ENCODE measurements at regions of chr2 and their contacts with region 1.

Region 1: DNA sequence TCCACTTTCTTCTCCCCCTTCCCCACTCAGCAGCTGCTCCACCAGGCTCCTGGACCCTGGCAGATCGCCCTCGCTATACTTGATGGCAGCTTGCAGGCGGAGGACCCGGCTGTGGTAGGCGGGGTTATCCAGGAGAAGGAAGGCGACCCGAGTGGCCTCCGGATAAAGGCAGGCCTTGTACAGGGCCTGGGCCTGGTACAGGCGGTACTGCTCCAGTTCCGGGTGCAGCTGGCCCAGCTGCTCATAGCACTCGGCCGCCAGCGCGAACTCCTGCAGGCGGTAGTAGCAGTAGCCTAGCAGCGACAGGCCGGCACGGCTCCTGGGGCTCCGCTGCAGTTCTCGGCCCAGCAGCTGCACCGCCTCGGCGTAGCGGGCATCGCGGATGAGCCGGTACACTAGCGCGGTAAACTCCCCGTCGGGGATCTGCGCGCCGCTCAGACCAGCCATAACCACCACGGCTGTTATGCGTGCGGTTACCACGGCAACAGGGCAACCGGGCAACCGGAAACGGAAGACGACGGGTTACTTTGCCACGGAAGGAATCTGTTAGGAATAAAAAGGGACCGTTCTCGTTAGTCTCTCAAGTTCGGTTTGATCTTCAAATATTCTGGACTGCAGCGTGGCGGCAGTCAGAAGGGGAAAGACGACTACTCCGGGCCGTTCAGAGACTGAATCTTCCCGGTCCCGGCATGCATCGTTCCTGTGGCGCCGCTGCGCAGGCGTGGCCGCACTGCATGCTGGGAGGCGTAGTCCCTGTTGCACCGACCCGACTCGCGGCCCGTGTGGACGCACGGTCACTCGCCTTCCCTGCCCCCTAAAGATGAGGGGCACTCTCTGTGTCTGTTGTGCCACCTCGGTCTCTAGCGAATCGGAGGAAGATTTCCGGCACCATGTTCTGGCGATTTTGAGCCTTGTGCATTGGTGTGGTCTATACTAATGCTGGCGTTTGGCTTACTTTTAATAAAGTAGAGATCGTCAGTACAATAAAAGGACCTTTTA is 226.0 kb downstream of the AGPS start:
- DNase-seq: peak; percentile 83
- H3K4me3 ChIP-seq: peak overlapping the region; percentile 55 to 82 (median 80)
- H3K27ac ChIP-seq: peak overlapping the region; percentile 99
- H3K4me1 ChIP-seq: peaks cover 4% of the 10 kb centered on the region
- H3K27me3 ChIP-seq: no peaks in the 10 kb centered on the region
- CTCF ChIP-seq: no peak

Region 2: GRCh38 chr2:177489719-177490301 is 128.7 kb before region 1 on chr2:
- CTCF ChIA-PET with region 1: no interaction called
- dilution Hi-C with region 1: no loop called
- in situ Hi-C with region 1: loop called in 1 of 2 experiments (anchors 25 kb)
- intact Hi-C with region 1: no loop called
- DNase-seq: no peak
- H3K4me3 ChIP-seq: no peak overlapping the region
- H3K27ac ChIP-seq: no peak overlapping the region
- H3K4me1 ChIP-seq: no peaks in the 10 kb centered on the region
- H3K27me3 ChIP-seq: no peaks in the 10 kb centered on the region
- CTCF ChIP-seq: peak; percentile 48 to 61

Region 3: DNA sequence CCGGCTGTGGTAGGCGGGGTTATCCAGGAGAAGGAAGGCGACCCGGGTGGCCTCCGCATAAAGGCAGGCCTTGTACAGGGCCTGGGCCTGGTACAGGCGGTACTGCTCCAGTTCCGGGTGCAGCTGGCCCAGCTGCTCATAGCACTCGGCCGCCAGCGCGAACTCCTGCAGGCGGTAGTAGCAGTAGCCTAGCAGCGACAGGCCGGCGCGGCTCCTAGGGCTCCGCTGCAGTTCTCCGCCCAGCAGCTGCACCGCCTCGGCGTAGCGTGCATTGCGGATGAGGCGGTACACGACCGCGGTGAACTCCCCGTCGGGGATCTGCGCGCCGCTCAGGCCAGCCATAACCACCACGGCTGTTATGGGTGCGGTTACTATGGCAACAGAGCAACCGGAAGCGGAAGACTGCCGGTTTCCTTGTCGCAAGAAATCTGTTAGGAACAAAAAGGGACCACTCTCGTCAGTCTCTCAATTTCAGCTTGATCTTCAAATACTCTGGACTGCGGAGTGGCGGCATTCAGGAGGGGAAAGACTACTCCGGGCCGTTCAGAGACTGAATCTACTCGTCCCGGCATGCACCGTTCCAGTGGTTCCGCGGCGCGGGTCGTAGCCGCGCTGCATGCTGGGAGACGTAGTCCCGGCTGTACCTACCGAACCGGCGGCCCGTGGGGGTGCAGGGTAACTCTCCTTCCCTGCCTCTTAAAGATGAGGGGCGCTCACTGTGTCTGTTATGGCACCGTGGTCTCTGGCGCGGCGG is 66.0 kb before region 1 on chr2:
- CTCF ChIA-PET with region 1: no interaction called
- dilution Hi-C with region 1: no loop called
- in situ Hi-C with region 1: no loop called
- intact Hi-C with region 1: loop called (anchors 2 kb)
- DNase-seq: peak; percentile 85
- H3K4me3 ChIP-seq: peak overlapping the region; percentile 65 to 74 (median 71)
- H3K27ac ChIP-seq: peak overlapping the region; percentile 100
- H3K4me1 ChIP-seq: no peaks in the 10 kb centered on the region
- H3K27me3 ChIP-seq: no peaks in the 10 kb centered on the region
- CTCF ChIP-seq: no peak

Region 4: GRCh38 chr2:177692828-177693269 is 74.3 kb after region 1 on chr2:
- CTCF ChIA-PET with region 1: no interaction called
- dilution Hi-C with region 1: no loop called
- in situ Hi-C with region 1: no loop called
- intact Hi-C with region 1: loop called (anchors 1 kb)
- DNase-seq: peak; percentile 70
- H3K4me3 ChIP-seq: no peak overlapping the region
- H3K27ac ChIP-seq: no peak overlapping the region
- H3K4me1 ChIP-seq: peaks cover 12% of the 10 kb centered on the region
- H3K27me3 ChIP-seq: no peaks in the 10 kb centered on the region
- CTCF ChIP-seq: peak; percentile 27 to 69

Region 5: DNA sequence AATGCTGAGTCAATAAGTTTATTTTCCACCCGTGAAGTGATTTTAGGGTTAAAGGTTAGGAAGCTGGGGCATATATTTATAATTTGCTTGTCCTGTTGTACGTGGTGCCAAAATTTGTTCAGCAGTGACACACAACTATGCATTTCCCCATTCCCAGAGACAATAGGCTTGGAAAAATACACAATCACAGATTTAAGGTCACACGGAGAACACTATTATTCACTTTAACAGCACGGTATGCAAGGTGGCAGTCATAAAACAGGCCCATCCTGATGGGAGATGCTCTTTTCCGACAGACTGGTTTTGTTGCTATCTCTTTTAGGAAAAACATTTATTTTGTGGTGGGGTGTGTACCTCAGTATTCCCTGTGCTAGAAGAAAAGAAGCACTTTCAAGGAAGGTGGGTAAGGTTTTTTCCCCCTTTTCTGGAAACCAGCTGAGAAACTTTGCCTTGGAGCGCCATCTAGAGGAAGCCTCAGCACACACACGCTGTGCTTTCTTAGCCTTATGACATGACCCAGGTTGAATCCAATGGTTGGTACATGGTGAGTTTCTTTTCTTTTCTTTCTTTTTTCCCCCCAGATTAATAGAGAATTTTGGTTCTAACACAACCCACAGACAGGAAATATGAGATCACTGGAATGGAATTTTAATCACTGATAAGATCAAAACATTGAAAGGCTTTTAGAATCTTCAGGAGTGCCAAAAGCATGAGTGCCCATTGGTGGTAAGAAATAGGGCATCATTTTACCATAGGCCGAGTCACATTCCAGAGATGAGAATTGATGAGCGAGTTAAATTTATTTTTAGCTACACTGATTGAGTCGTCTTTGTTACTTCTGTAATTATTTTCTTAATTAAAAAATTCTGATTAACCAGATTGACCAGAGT is 106.1 kb after region 1 on chr2:
- CTCF ChIA-PET with region 1: no interaction called
- dilution Hi-C with region 1: no loop called
- in situ Hi-C with region 1: no loop called
- intact Hi-C with region 1: loop called (anchors 1 kb)
- DNase-seq: peak; percentile 15
- H3K4me3 ChIP-seq: no peak overlapping the region
- H3K27ac ChIP-seq: no peak overlapping the region
- H3K4me1 ChIP-seq: no peaks in the 10 kb centered on the region
- H3K27me3 ChIP-seq: peaks cover 2% of the 10 kb centered on the region
- CTCF ChIP-seq: peak; percentile 91 to 95

Region 6: GRCh38 chr2:177763532-177764265 is 145.1 kb after region 1 on chr2:
- CTCF ChIA-PET with region 1: no interaction called
- dilution Hi-C with region 1: no loop called
- in situ Hi-C with region 1: no loop called
- intact Hi-C with region 1: loop called (anchors 2 kb)
- DNase-seq: peak; percentile 35
- H3K4me3 ChIP-seq: no peak overlapping the region
- H3K27ac ChIP-seq: no peak overlapping the region
- H3K4me1 ChIP-seq: no peaks in the 10 kb centered on the region
- H3K27me3 ChIP-seq: peaks cover 2% of the 10 kb centered on the region
- CTCF ChIP-seq: peak; percentile 69 to 89

Region 7: GRCh38 chr2:178025551-178026185 is 407.1 kb after region 1 on chr2:
- CTCF ChIA-PET with region 1: no interaction called
- dilution Hi-C with region 1: no loop called
- in situ Hi-C with region 1: no loop called
- intact Hi-C with region 1: no loop called
- DNase-seq: no peak
- H3K4me3 ChIP-seq: no peak overlapping the region
- H3K27ac ChIP-seq: no peak overlapping the region
- H3K4me1 ChIP-seq: no peaks in the 10 kb centered on the region
- H3K27me3 ChIP-seq: no peaks in the 10 kb centered on the region
- CTCF ChIP-seq: no peak

Measured in mammary epithelial cell (primary cell).